ENCODE measurements at regions of chr18 and their contacts with region 1.

Region 1: DNA sequence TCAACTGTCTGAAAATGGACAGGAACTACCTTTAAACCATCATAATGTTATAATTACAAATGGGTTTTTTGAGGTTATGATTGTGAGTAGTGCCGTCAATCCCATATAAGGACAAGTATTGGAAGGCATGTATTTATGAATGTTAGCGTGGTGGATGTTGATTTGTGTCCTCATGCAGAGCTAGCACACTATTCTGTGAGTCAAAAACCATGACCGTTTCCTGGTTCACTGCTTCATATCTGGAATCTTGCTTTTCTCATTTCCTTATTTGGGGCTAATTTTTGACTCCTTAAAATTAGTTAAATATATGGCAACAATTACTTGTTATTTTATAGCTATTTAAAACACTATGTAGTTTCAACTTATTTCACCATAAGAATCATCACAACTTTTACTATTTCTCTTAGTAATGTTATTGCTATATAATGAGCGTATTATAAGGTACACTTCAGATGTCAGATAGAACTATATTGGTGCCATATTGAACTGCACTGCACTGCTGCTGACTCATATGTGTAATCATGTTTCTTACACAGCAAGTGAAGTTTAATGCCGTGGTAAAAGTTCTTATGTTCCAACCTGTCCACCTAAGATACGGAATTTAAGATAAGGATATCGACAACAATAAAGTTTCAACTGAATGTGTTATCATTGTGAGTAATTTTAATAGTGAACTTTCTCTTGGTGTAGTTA is 192.8 kb downstream of the PTGR3 start:
- DNase-seq: no peak
- ATAC-seq: no peak
- H3K4me3 ChIP-seq: no peak overlapping the region
- H3K4me3 Mint-ChIP-seq: no peak overlapping the region
- H3K27ac ChIP-seq: no peak overlapping the region
- H3K27ac Mint-ChIP-seq: no peak overlapping the region
- H3K4me1 ChIP-seq: no peaks in the 10 kb centered on the region
- H3K4me1 Mint-ChIP-seq: peaks cover 5% of the 10 kb centered on the region
- H3K27me3 ChIP-seq: no peaks in the 10 kb centered on the region
- H3K27me3 Mint-ChIP-seq: no peaks in the 10 kb centered on the region
- CTCF ChIP-seq: no peak

Region 2: DNA sequence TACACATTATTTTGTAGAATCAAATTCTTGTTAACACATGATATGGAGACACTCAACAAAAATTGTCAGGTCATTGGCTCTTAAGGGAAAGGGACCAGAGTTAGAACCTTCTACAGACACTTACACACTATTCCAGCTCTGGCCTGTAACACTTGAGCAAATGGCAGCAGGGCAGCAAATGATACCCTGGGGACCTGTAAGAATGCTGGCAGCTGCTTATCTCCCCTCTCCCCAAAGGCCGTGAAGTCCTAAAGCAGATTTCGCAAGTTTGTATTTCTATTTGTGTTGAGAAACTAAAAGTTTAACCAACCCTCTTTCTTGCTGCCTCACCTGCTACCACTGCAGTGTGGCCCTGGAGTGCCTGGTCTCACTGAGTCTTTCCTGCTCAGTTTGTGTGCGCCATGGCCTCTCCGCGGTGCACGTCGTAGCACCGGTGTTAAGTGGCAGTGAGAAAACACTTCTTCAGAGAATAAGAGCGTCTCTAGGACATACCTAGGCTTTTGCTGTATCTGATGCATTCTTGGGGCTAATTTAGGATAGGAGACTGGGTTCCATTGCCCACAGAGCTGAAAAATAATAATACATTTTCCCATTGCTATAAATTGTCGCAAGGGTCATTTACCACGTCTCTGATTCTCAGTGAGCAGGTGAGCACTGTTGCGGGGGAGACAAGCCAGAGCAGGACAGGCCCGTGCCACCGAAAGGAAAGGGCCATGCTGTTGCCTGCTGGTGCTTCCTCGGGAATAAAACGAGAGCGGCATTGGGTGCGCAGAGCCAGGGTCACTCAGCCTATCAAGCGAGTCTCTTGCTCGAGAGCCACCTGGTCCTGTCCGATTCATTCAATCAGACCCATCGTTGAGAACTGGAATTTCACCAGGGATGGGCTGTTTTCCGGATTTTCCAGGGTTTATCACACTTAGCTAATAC is 12.1 kb before region 1 on chr18:
- CTCF ChIA-PET with region 1: no interaction called
- POLR2A ChIA-PET with region 1: no interaction called
- intact Hi-C with region 1: loop called in 1 of 2 experiments (anchors 1 kb)
- DNase-seq: no peak
- ATAC-seq: no peak
- H3K4me3 ChIP-seq: no peak overlapping the region
- H3K4me3 Mint-ChIP-seq: no peak overlapping the region
- H3K27ac ChIP-seq: no peak overlapping the region
- H3K27ac Mint-ChIP-seq: no peak overlapping the region
- H3K4me1 ChIP-seq: no peaks in the 10 kb centered on the region
- H3K4me1 Mint-ChIP-seq: no peaks in the 10 kb centered on the region
- H3K27me3 ChIP-seq: no peaks in the 10 kb centered on the region
- H3K27me3 Mint-ChIP-seq: no peaks in the 10 kb centered on the region
- CTCF ChIP-seq: no peak

Measured in CD4-positive, alpha-beta T cell (primary cell).